ENCODE measurements at regions of chr4 and their contacts with region 1.

Region 1: DNA sequence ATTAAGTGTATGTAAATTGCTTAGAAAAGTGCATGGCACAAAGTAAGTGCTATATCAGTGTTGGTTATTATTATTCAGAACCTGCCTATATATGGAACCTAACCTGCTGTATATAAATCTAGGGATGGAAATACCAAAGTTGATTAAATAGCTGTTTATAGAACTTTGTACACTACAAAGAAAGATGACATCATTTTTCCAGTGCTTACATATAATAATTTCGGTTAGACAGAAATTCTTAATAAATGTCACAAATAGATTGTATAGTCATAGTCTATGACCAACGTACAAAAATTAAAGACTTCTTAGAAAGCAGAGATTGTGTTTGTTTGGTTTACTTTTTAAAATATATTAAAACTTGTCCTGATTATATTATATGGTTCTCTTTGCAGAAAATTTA is 4.4 kb downstream of the GYPB start:
- DNase-seq: no peak
- H3K4me3 ChIP-seq: no peak overlapping the region
- H3K27ac ChIP-seq: no peak overlapping the region
- H3K4me1 ChIP-seq: no peaks in the 10 kb centered on the region
- H3K27me3 ChIP-seq: no peaks in the 10 kb centered on the region
- CTCF ChIP-seq: no peak

Region 2: DNA sequence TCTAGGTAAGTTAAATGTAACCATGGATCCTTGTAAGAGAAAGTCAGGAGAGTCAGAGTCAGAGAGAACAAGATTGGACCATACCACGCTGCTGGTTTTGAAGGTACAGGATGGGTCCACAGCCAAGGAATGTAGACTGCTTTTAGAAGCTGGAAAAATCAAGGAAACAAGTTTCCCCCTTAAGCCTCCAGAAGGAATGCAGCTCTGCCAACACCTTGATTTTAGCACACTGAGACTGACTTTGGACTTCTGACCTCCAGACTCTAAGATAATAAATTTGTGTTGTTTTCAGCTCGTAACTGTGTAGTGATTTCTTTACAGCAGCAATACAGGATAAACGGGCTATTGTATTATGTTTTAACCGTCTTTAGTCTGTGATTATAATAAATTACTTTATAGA is 938.1 kb before region 1 on chr4:
- CTCF ChIA-PET with region 1: no interaction called
- POLR2A ChIA-PET with region 1: no interaction called
- intact Hi-C with region 1: loop called (anchors 5 kb)
- DNase-seq: no peak
- H3K4me3 ChIP-seq: no peak overlapping the region
- H3K27ac ChIP-seq: no peak overlapping the region
- H3K4me1 ChIP-seq: no peaks in the 10 kb centered on the region
- H3K27me3 ChIP-seq: no peaks in the 10 kb centered on the region
- CTCF ChIP-seq: no peak

Region 3: GRCh38 chr4:143773998-143774895 is 240.6 kb before region 1 on chr4:
- CTCF ChIA-PET with region 1: no interaction called
- POLR2A ChIA-PET with region 1: no interaction called
- intact Hi-C with region 1: loop called (anchors 2 kb)
- DNase-seq: peak; percentile 72
- H3K4me3 ChIP-seq: no peak overlapping the region
- H3K27ac ChIP-seq: no peak overlapping the region
- H3K4me1 ChIP-seq: no peaks in the 10 kb centered on the region
- H3K27me3 ChIP-seq: no peaks in the 10 kb centered on the region
- CTCF ChIP-seq: peak; percentile 78

Measured in A673 (cell line).